H1 (cell line): ENCODE measurements at regions of chr1 and their contacts with region 1.

Region 1: GRCh38 chr1:67149179-67149770 is 14.5 kb upstream of the C1orf141 start:
- DNase-seq: peak; percentile 34 to 60
- H3K4me3 ChIP-seq: no peak overlapping the region
- H3K27ac ChIP-seq: no peak overlapping the region
- H3K4me1 ChIP-seq: 0 out of 7 replicates have a peak, but pooled peaks cover 0 to 4% (median 0%) of the 10 kb centered on the region in 4 experiments
- H3K27me3 ChIP-seq: no peaks in the 10 kb centered on the region
- CTCF ChIP-seq: peak; percentile 58 to 99 (median 78)
- EP300 ChIP-seq: no peak; a peak in 1 of 3 replicates
- POLR2A ChIP-seq: no peak
- RAD21 ChIP-seq: peak; percentile 92 to 96

Region 2: DNA sequence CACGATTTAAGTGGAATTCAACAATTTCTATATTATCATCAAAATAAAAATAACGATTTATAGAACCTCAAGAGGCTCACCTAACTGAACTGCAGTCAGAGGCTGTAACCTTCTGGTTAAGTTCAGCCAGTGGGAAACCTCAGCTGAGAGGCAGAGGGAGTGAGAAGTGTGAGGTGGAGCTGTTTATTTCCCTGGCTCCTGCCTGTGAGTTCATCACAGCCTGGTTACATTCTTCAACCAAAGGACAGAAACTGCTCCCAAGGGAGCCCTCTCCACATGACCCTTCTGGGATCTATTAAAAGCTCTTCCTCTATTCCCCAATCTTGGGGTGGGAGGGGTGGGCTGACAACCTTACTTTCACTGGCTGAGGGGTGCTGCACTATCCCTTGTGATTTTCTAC is 374.8 kb before region 1 on chr1:
- CTCF ChIA-PET with region 1: interaction called, 12 read pairs
- POLR2A ChIA-PET with region 1: no interaction called
- DNase-seq: no peak
- H3K4me3 ChIP-seq: no peak overlapping the region
- H3K27ac ChIP-seq: no peak overlapping the region
- H3K4me1 ChIP-seq: no peaks in the 10 kb centered on the region
- H3K27me3 ChIP-seq: no peaks in the 10 kb centered on the region
- CTCF ChIP-seq: no peak
- EP300 ChIP-seq: no peak
- POLR2A ChIP-seq: no peak
- RAD21 ChIP-seq: no peak

Region 3: DNA sequence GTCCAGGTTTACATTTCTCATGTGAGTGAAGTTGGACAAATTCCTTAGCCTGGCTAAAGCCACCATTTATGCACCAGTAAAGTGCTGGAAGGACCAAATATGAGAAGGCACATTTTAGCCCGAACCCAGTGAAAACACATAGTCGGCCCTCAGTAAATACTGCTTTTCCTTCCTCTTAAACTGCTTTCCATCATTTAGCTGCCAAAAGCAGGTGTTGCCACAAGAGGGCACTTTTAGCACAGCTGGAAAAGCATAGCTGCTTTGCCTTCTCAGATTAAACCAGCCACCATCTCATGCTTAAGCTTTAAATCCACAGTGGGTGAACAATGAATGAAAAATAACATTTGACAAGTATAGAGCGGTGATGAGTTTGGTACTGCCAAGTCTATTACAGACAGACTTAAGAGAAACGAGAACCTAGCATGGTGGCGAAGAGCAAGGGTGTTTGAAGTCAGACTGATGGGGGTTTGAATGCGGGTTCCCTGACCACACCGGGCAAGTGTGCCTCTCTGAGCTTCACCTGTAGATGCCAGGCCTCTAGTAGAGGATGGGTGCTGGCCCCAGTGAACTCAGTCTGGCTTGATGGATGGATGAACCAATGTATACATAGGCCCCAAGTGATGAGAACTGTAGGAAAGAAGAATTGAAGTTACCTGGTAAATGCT is 153.1 kb before region 1 on chr1:
- CTCF ChIA-PET with region 1: interaction called, 133 read pairs
- POLR2A ChIA-PET with region 1: interaction called, 4 read pairs
- DNase-seq: peak; percentile 19 to 58
- H3K4me3 ChIP-seq: no peak overlapping the region
- H3K27ac ChIP-seq: no peak overlapping the region
- H3K4me1 ChIP-seq: no peaks in the 10 kb centered on the region
- H3K27me3 ChIP-seq: no peaks in the 10 kb centered on the region
- CTCF ChIP-seq: peak in 2 of 3 experiments; percentile 83 to 86; a peak in 3 of 4 replicates
- EP300 ChIP-seq: no peak
- POLR2A ChIP-seq: no peak
- RAD21 ChIP-seq: peak; percentile 96 to 97

Region 4: DNA sequence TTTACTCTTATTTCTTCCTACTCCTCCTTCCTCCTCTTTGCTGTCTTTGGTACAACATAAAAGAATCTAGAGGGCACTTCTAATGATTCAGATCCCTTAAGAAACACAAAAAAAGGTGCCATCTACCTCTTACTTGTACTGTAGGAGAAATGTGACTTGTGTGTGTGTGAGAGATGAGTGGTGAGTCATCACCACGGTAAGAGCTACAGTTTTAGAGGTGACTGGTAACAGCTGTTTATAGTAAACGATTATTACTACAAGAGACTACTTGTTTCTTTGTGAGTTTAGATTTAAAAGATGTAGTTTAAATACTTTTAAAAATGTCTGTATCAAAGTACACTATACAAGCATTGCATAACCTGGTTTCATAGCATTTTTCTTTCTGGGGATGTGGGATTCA is 135.7 kb before region 1 on chr1:
- CTCF ChIA-PET with region 1: interaction called, 27 read pairs
- POLR2A ChIA-PET with region 1: no interaction called
- DNase-seq: no peak
- H3K4me3 ChIP-seq: no peak overlapping the region
- H3K27ac ChIP-seq: no peak overlapping the region
- H3K4me1 ChIP-seq: peaks cover 0 to 1% (median under 1%) of the 10 kb centered on the region in 4 experiments; a peak in 2 of 7 replicates
- H3K27me3 ChIP-seq: 0 out of 7 replicates have a peak, but pooled peaks cover 0 to under 1% (median 0%) of the 10 kb centered on the region in 4 experiments
- CTCF ChIP-seq: no peak
- EP300 ChIP-seq: no peak
- POLR2A ChIP-seq: no peak
- RAD21 ChIP-seq: no peak

Region 5: GRCh38 chr1:67053785-67054772 is 95.2 kb before region 1 on chr1 and contains the start of gene SLC35D1:
- CTCF ChIA-PET with region 1: interaction called, 25 read pairs
- POLR2A ChIA-PET with region 1: no interaction called
- DNase-seq: peak; percentile 61 to 91
- H3K4me3 ChIP-seq: peak within 1 kb of the TSS; percentile 73 to 96 (median 76)
- H3K27ac ChIP-seq: 0 out of 2 replicates have a peak within 1 kb of the TSS, but pooled peaks have one; percentile 8
- H3K4me1 ChIP-seq: peaks cover 0 to 9% (median 2%) of the 10 kb centered on the region in 4 experiments; a peak in 3 of 7 replicates
- H3K27me3 ChIP-seq: no peaks in the 10 kb centered on the region; a peak in 1 of 7 replicates
- CTCF ChIP-seq: no peak
- EP300 ChIP-seq: no peak
- POLR2A ChIP-seq: peak in 1 of 2 experiments; percentile 65; a peak in 2 of 3 replicates
- RAD21 ChIP-seq: no peak; a peak in 1 of 4 replicates
- total RNA-seq, gene SLC35D1: 2.7 and 2.8 TPM in 2 replicates

Region 6: DNA sequence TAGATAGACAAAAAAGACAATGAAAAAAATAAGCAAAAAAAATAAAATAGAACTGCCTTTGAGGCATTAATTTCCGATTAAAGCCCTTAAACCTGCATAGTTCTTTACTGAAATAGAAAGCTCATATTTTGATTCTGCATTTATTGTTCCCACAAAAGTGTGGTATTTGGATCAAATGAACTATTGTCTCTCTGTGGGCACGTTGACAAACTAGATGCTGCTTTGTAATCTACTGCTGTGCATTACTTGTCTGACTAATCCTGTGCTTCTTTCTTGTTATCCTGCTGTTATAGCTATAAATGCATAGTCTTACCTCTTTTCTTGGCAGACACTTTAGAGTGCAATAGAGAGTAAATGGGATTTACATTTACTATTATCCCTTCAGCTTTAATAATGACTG is 63.9 kb before region 1 on chr1:
- CTCF ChIA-PET with region 1: no interaction called
- POLR2A ChIA-PET with region 1: no interaction called
- DNase-seq: no peak
- H3K4me3 ChIP-seq: no peak overlapping the region
- H3K27ac ChIP-seq: no peak overlapping the region
- H3K4me1 ChIP-seq: no peaks in the 10 kb centered on the region
- H3K27me3 ChIP-seq: peaks cover 0 to 1% (median 0%) of the 10 kb centered on the region in 4 experiments; a peak in 1 of 7 replicates
- CTCF ChIP-seq: no peak
- EP300 ChIP-seq: no peak
- POLR2A ChIP-seq: no peak
- RAD21 ChIP-seq: no peak

Region 7: GRCh38 chr1:67134695-67135094 is 14.6 kb before region 1 on chr1 and contains the start of gene C1orf141:
- CTCF ChIA-PET with region 1: interaction called, 34 read pairs
- POLR2A ChIA-PET with region 1: no interaction called
- DNase-seq: peak in 1 of 2 experiments; percentile 53
- H3K4me3 ChIP-seq: peak within 1 kb of the TSS; percentile 39 to 56 (median 49); a peak in 7 of 8 replicates
- H3K27ac ChIP-seq: no peak within 1 kb of the TSS
- H3K4me1 ChIP-seq: peaks cover 2 to 7% (median 4%) of the 10 kb centered on the region in 4 experiments; a peak in 4 of 7 replicates
- H3K27me3 ChIP-seq: 0 out of 7 replicates have a peak, but pooled peaks cover 0 to 2% (median 0%) of the 10 kb centered on the region in 4 experiments
- CTCF ChIP-seq: no peak
- EP300 ChIP-seq: no peak
- POLR2A ChIP-seq: no peak
- RAD21 ChIP-seq: no peak
- total RNA-seq, gene C1orf141: not detected in 2 replicates

Region 8: DNA sequence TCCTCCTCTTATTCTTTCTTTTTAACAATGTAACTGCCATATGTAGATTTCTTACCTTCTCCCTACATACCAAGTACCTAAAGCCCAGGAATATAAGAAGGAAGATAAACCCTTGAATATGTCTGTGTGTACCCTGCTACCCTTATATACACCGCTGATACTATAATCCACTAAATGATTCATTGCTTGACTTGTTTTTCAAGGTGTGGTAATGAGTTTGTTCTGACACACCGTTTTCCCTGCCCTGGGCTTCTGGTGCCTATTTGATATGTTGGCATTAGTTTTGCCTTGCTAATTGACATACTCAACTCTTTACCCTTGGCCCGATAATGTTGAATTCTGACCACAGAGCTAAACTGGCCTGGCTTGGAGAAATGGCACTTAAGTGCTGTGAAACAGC is 81.3 kb after region 1 on chr1:
- CTCF ChIA-PET with region 1: no interaction called
- POLR2A ChIA-PET with region 1: no interaction called
- DNase-seq: no peak
- H3K4me3 ChIP-seq: no peak overlapping the region
- H3K27ac ChIP-seq: no peak overlapping the region
- H3K4me1 ChIP-seq: no peaks in the 10 kb centered on the region
- H3K27me3 ChIP-seq: no peaks in the 10 kb centered on the region
- CTCF ChIP-seq: no peak
- EP300 ChIP-seq: no peak
- POLR2A ChIP-seq: no peak
- RAD21 ChIP-seq: no peak